Calu3 (cell line): ENCODE measurements at regions of chr5 and their contacts with region 1.

Region 1: DNA sequence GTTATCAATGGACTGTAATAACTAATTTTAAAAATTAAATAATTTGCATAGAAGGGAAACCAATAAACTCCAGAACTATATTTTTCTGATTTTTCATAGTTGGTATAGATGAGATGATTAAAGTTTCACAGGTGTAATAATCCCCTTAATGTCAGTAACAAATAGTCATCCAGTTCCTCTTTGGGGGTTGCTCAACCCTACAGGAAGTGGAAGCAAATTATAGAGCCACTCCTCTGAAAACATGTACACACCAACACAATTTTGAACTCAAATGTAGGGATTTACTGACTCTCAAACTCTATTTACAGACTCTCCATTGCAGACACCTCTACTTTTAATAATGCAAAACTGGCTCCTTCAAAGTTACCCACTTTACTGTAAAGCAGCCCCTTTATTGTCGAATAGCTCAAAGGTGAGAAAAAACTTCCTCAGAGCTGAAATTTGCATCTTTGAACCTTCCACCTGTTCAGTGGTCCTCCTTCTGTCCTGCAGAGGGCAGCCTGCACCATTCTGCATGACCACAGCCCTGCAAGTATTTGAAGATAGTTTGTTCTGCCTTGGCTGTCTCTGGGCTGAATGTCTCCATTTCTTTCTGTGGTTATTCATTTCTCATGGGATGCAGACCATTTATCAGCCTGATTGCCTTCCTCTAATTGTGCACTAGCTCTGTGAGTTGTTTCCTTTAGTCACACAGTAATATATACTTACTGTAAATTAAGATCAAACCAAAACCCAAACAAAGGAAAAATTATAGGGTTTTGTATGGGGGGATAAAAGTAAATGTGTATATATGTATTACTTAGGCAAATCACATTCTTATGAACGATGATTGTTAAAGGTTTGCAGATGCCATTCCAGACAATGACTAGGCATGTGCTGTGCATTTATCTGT is 383.2 kb upstream of the SGCD start:
- DNase-seq: peak; percentile 39
- H3K4me3 Mint-ChIP-seq: no peak overlapping the region
- H3K27ac Mint-ChIP-seq: no peak overlapping the region
- H3K4me1 Mint-ChIP-seq: no peaks in the 10 kb centered on the region
- H3K27me3 Mint-ChIP-seq: peaks cover 16% of the 10 kb centered on the region
- CTCF ChIP-seq: peak; percentile 45

Region 2: GRCh38 chr5:156655732-156656131 is 712.0 kb after region 1 on chr5:
- CTCF ChIA-PET with region 1: no interaction called
- intact Hi-C with region 1: loop called (anchors 10 kb)
- DNase-seq: no peak
- H3K4me3 Mint-ChIP-seq: no peak overlapping the region
- H3K27ac Mint-ChIP-seq: no peak overlapping the region
- H3K4me1 Mint-ChIP-seq: no peaks in the 10 kb centered on the region
- H3K27me3 Mint-ChIP-seq: peaks cover 19% of the 10 kb centered on the region
- CTCF ChIP-seq: no peak

Region 3: GRCh38 chr5:156824800-156825199 is 881.0 kb after region 1 on chr5:
- CTCF ChIA-PET with region 1: interaction called, 4 read pairs
- intact Hi-C with region 1: loop called (anchors 2 kb)
- DNase-seq: peak; percentile 36
- H3K4me3 Mint-ChIP-seq: no peak overlapping the region
- H3K27ac Mint-ChIP-seq: no peak overlapping the region
- H3K4me1 Mint-ChIP-seq: no peaks in the 10 kb centered on the region
- H3K27me3 Mint-ChIP-seq: no peaks in the 10 kb centered on the region
- CTCF ChIP-seq: no peak